ENCODE measurements at regions of chr15 and their contacts with region 1.

Region 1: GRCh38 chr15:66251790-66252684 is 1.5 kb downstream of the MEGF11 start:
- DNase-seq: peak; percentile 53 to 85 (median 84)
- ATAC-seq: peak; percentile 79 to 87
- H3K4me3 ChIP-seq: peak overlapping the region; percentile 40
- H3K27ac ChIP-seq: no peak overlapping the region
- H3K4me1 ChIP-seq: peaks cover 2% of the 10 kb centered on the region
- H3K27me3 ChIP-seq: no peaks in the 10 kb centered on the region

Region 2: DNA sequence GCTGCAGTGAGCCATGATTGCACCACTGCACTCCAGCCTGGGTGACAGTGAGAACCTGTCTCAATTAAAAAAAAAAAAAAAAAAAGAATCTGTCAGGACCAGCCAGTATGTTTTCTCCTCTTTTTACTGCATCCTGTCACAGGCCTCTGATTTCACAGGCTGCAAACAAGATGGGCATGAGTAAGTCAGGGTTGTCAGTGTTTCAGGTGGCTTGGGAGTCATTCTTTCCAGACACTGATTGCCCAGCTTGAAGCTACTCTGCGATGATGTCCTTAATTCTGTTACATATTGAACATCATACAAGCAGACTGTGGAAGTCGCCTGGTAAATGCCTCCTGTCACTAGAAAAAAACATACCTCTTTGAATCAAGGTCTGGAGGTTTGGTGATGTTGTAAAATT is 60.1 kb after region 1 on chr15:
- intact Hi-C with region 1: loop called in 1 of 4 experiments (anchors 10 kb)
- DNase-seq: no peak
- ATAC-seq: no peak
- H3K4me3 ChIP-seq: no peak overlapping the region
- H3K27ac ChIP-seq: no peak overlapping the region
- H3K4me1 ChIP-seq: no peaks in the 10 kb centered on the region
- H3K27me3 ChIP-seq: no peaks in the 10 kb centered on the region

Region 3: DNA sequence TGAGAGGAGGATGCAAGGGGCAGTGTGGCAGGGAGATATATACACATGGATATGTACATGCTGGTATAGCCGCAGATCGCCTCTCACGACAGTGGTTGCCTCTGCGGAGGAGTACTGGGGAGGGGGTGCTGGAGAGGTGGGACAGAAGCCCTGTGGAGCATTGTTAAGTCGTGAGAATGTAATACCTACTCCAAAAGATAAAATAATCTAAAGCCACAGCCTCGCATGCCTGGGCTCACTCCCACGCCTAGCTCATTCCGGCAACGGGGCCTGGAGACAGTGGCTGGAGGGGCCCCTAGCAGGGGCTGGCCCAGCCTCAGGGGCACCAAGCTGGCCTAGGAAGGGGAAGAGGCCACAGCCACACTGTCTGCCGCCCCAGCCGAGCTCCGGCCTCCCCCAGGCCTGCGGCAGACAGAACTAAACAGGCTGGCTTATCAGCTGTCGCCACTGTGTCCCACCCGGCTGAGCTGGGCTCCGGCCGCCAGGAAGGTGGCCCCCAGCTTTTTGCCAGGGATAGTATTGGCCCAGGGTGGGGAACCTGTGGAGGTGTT is 378.8 kb after region 1 on chr15:
- intact Hi-C with region 1: no loop called
- DNase-seq: peak; percentile 52 to 82 (median 81)
- ATAC-seq: peak; percentile 72 to 76
- H3K4me3 ChIP-seq: no peak overlapping the region
- H3K27ac ChIP-seq: peak overlapping the region; percentile 77
- H3K4me1 ChIP-seq: peaks cover 29% of the 10 kb centered on the region
- H3K27me3 ChIP-seq: no peaks in the 10 kb centered on the region